ENCODE measurements at regions of chr12 and their contacts with region 1.

Region 1: DNA sequence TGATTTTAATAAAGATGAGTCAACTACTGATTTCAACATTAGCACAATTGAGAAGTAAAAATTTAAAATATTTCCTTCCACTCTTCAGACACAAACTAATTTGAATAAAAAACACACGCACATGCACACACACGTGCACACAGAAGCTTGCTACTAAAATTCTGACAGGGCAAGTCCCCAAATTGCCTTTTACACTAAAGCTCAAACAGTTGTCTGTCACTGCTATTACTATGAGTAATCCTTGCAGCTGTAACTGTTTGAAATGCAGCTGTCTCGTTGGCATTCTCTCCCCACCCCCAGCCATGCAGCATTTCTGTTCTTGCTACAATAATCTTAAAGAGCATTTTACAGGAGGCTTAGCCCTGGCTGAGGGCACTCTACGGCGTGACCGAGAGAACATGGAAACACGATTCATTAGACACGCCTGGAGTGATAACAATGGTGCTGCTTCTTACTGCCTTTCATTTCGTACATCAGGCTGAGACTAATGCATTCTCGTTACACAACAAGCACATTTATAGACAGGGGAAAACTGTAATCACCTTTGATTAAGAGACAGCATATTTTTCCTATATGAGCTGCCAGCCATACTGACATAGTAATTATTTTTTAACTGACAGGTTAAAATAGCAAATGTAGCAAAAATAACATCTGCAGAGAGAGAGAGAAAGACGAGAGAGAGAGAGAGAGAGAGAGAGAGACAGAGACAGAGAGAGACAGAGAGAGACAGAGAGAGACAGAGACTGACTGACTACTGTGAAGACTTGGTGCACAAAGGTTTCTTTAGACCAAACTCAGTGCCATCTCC is 153.8 kb downstream of the MED13L start:
- DNase-seq: peak; percentile 34
- CTCF ChIP-seq: no peak

Region 2: GRCh38 chr12:116093915-116094314 is 29.7 kb before region 1 on chr12:
- CTCF ChIA-PET with region 1: no interaction called
- POLR2A ChIA-PET with region 1: no interaction called
- DNase-seq: no peak
- CTCF ChIP-seq: no peak

Region 3: GRCh38 chr12:116104167-116104767 is 19.4 kb before region 1 on chr12:
- CTCF ChIA-PET with region 1: interaction called, 10 read pairs
- POLR2A ChIA-PET with region 1: no interaction called
- DNase-seq: no peak
- CTCF ChIP-seq: no peak

Region 4: DNA sequence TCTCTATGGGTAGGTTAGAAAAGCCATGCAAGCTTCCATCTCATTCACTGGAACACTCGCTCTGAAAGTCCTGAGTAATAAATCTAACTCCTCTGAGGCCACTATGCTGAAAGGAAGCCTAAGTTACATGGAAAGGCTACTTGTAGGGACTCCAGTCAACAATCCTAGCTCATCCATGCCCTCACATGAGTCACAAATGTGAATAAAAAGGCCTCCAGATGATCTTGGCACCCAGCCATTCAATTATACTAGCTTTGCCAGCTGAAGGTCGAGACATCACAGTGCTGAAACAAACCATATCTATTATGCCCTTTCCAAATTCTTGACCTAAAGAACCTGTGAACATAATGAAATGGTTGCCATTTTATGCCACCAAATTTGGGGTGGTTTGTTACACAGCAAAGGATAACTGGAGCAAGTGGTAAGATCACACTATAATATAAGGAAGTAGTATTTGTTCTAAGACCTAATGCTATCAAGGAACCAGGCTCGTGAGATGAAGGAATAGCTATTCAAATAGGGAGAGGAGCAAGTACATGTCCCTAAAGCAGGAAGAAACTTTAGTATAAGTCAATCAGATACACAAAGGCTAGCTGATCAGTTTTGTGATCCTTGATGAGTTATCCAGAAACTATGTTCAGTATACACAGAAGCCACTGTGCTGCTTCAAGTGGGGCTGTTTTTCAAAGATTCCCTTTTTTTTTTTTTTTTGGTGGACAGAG is 11.7 kb after region 1 on chr12:
- CTCF ChIA-PET with region 1: interaction called, 18 read pairs
- POLR2A ChIA-PET with region 1: no interaction called
- DNase-seq: no peak
- CTCF ChIP-seq: no peak

Region 5: GRCh38 chr12:116697305-116697704 is 573.6 kb after region 1 on chr12:
- CTCF ChIA-PET with region 1: no interaction called
- POLR2A ChIA-PET with region 1: interaction called, 10 read pairs
- DNase-seq: peak; percentile 57
- CTCF ChIP-seq: peak; percentile 55

Measured in GM10248 (cell line).